ENCODE measurements at regions of chr2 and their contacts with region 1.

Region 1: DNA sequence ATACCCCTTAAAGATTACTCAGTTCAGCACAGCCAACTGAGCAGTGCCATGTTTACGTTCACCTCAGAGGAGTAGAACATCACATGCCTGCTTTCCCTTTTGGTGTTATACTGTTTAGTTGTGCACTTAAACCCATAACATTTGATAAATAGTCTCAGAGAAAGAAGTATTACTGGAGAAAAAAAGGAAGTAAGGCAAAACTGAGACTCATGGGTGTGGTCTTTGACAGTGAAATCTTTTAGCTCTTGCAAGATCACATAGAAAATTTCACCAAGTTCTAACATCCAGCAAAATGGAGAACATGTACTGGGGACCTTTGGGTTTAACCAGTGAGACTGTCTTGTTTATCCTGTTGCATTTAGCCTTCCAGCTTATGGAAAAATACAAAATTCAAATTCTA is 5.6 kb downstream of the TANK start:
- DNase-seq: no peak
- H3K4me3 ChIP-seq: no peak overlapping the region
- H3K27ac ChIP-seq: peak overlapping the region; percentile 51 to 58
- H3K4me1 ChIP-seq: peaks cover 0 to 22% of the 10 kb centered on the region in 2 donors
- H3K27me3 ChIP-seq: no peaks in the 10 kb centered on the region
- CTCF ChIP-seq: no peak
- POLR2A ChIP-seq: no peak

Region 2: DNA sequence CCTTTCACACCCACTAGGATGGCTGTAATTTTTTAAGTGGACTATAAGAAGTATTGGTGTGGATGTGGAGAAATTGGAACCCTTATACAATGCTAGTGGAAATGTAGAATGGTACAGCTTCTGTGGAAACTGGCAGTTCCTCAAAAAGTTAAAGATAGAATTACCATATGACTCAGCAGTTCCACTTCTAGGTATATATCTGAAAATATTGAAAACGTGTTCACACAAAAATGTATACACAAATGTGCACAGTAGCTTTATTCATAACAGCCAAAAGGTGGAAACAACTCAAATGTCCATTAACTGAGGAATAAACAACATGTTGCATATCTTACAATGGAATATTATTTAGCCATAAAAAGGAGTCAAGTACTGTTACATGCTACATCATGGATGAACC is 12.2 kb after region 1 on chr2:
- intact Hi-C with region 1: loop called (anchors 2 kb)
- DNase-seq: no peak
- H3K4me3 ChIP-seq: no peak overlapping the region
- H3K27ac ChIP-seq: no peak overlapping the region
- H3K4me1 ChIP-seq: no peaks in the 10 kb centered on the region
- H3K27me3 ChIP-seq: no peaks in the 10 kb centered on the region
- CTCF ChIP-seq: no peak
- POLR2A ChIP-seq: no peak

Measured in breast epithelium (tissue), 4 donors.